ENCODE measurements at regions of chr1 and their contacts with region 1.

Region 1: DNA sequence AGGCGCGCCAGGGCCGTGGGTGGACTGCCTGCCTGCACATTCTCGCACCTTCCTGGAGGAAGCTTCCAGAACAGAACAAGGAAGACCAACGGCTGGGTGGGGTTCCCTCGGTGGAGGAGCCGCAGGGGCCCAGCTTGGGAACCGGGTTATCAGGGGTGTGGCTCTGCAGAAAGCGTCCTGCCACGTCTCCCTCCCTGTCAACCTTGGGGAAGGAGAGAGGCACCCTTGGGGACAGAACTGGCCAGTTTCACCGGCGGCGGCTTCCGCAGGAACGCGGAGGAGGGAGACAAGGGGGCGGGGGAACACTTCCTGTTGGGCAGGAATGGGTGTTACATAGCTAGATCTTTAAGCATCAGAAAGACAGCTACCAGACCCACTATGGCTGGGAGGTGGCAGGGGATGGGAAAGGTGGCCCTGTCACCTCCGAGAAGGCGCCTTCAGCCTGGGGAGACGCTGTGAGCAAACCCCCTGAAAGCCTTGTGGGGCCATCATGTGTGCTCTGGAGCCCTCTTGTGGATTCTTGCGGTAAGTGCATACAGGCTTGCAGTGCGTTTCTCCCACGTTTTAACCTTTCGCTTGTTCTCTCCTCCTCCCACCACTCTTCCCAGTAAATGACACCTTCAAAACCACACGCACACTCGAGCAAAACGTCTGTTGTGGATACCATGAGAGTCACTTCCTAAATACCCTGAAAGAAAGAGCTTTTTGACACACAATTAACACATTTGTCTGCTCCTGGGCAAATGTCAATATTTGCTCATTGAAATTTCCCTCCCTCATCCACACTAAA is 3.8 kb upstream of the PLEKHA6 start:
- DNase-seq: peak; percentile 65 to 75 (median 74)
- H3K4me3 ChIP-seq: peak overlapping the region; percentile 23
- H3K27ac ChIP-seq: no peak overlapping the region
- H3K4me1 ChIP-seq: peaks cover 2% of the 10 kb centered on the region
- H3K27me3 ChIP-seq: no peaks in the 10 kb centered on the region
- CTCF ChIP-seq: peak; percentile 97 to 98 (median 97)
- EP300 ChIP-seq: no peak
- POLR2A ChIP-seq: peak; percentile 36

Region 2: GRCh38 chr1:203229471-203230135 is 1133.9 kb before region 1 on chr1 and contains the start of gene CHIT1:
- intact Hi-C with region 1: no loop called
- DNase-seq: no peak
- H3K4me3 ChIP-seq: no peak within 1 kb of the TSS
- H3K27ac ChIP-seq: no peak within 1 kb of the TSS
- H3K4me1 ChIP-seq: no peaks in the 10 kb centered on the region
- H3K27me3 ChIP-seq: no peaks in the 10 kb centered on the region
- CTCF ChIP-seq: no peak
- EP300 ChIP-seq: no peak
- POLR2A ChIP-seq: no peak
- total RNA-seq, gene CHIT1: 0.08 to 26.9 (median 0.77) TPM in 4 of 7 donors, not detected in the others

Region 3: DNA sequence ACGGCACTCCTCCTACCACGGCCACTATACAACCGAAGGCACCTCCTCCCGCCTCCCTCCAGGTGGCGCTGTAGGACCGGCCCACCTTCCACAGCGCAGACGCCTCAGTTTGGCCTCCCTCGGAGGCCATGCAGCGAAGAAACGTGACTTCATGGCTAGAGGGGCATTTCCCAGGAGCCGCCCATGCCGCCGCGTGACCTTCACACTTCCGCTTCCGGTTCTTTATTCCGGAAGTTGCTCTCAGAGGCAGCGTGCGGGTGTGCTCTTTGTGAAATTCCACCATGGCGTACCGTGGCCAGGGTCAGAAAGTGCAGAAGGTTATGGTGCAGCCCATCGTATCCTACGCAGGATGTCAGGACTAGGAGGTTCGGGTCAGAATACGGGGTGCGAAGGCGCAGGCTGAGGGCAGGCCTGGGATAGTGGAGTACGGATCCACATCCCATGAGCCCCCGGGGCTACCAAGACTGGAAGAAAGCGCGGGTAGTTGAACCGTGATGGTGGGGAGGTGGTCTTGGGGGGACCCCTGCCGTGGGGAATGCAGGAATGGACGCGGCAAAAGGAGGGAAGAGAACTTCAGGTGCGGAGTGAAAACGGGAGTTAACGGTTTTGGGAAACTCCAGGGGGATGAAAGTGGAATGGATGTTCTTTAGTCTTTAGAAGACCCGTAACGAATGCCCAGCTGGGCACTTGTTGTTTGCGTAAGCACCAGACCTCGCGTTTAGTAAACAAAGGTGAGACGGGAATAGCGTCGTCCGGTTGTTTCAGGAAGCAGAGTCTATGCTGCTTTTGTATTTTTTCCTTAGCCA is 501.9 kb before region 1 on chr1 and contains the start of gene SNRPE:
- intact Hi-C with region 1: loop called in 2 of 4 experiments (anchors 10 kb)
- DNase-seq: peak; percentile 95 to 96 (median 95)
- H3K4me3 ChIP-seq: peak within 1 kb of the TSS; percentile 84
- H3K27ac ChIP-seq: peak within 1 kb of the TSS in 1 of 2 donors; percentile 15
- H3K4me1 ChIP-seq: peaks cover 3% of the 10 kb centered on the region
- H3K27me3 ChIP-seq: no peaks in the 10 kb centered on the region
- CTCF ChIP-seq: peak; percentile 95 to 97 (median 97)
- EP300 ChIP-seq: no peak
- POLR2A ChIP-seq: peak; percentile 71
- total RNA-seq, gene SNRPE: 72.5 to 151 (median 127) TPM

Region 4: GRCh38 chr1:204162231-204163074 is 201.1 kb before region 1 on chr1:
- intact Hi-C with region 1: loop called (anchors 2 to 5 kb)
- DNase-seq: peak; percentile 73 to 89 (median 85)
- H3K4me3 ChIP-seq: no peak overlapping the region
- H3K27ac ChIP-seq: no peak overlapping the region
- H3K4me1 ChIP-seq: no peaks in the 10 kb centered on the region
- H3K27me3 ChIP-seq: no peaks in the 10 kb centered on the region
- CTCF ChIP-seq: peak; percentile 89 to 95 (median 94)
- EP300 ChIP-seq: no peak
- POLR2A ChIP-seq: no peak

Region 5: DNA sequence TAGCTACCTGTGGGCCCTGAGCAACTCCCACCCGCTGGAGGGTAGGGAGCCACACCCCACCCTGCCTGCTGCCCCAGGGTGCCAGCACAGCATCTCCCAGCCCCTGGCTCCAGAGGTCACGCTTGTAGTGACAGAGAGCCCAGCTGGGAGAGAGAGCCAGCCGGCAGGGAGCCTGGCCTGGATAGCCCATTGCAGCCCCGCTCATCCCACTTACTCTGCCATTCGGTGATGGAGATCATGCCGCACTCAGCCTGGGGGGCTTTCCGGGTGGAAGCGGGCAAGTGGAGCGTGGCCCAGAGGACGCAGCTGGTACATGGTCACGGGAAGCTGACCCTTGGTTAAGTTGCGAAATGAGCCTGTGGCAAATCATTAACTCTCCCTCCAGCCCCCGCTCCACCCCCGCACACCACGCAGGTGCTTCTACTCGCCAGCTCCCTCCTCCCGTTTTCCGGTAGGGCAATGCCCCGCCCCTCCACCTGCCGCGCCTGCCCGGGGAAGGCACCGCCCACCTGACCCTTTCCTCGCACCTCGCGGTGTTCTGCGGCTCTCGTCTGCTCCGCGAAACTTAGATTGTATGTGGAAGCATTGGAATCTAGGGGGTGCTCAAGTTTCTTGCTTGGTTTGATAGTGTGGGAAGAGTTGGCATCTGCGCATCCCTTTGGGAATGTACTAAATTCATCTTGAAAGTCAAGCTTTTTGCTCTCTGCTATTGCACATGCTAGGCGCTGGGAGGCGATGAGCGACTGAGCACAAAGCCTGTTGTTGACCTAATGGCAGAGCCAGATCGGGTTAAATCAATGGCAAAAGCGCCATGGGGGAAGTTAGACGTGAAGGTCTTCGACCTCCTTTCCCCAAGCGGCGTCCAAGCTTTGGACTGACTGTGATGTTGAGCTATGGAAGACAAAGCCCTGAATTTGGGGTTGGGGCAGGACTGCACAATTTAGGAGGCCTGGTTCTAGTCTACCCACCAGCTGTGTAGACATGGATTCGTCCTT is 149.6 kb before region 1 on chr1 and contains the start of gene GOLT1A:
- intact Hi-C with region 1: loop called (anchors 2 to 5 kb)
- DNase-seq: peak; percentile 50 to 71 (median 58)
- H3K4me3 ChIP-seq: peak within 1 kb of the TSS; percentile 12
- H3K27ac ChIP-seq: no peak within 1 kb of the TSS
- H3K4me1 ChIP-seq: no peaks in the 10 kb centered on the region
- H3K27me3 ChIP-seq: no peaks in the 10 kb centered on the region
- CTCF ChIP-seq: peak in 2 of 3 donors; percentile 63 to 70
- EP300 ChIP-seq: no peak
- POLR2A ChIP-seq: no peak
- total RNA-seq, gene GOLT1A: 0.27 to 3.9 (median 0.41) TPM in 3 of 7 donors, not detected in the others

Region 6: GRCh38 chr1:204257954-204258752 is 105.4 kb before region 1 on chr1:
- intact Hi-C with region 1: loop called in 1 of 4 experiments (anchors 5 kb)
- DNase-seq: peak; percentile 57 to 75 (median 69)
- H3K4me3 ChIP-seq: no peak overlapping the region
- H3K27ac ChIP-seq: no peak overlapping the region
- H3K4me1 ChIP-seq: no peaks in the 10 kb centered on the region
- H3K27me3 ChIP-seq: no peaks in the 10 kb centered on the region
- CTCF ChIP-seq: peak; percentile 44 to 64 (median 46)
- EP300 ChIP-seq: no peak
- POLR2A ChIP-seq: no peak